WTC11 (cell line): ENCODE measurements at regions of chr19 and their contacts with region 1.

Region 1: GRCh38 chr19:18951665-18952281 is 10.8 kb upstream of the HOMER3 start:
- DNase-seq: no peak
- ATAC-seq: no peak
- H3K4me3 Mint-ChIP-seq: no peak overlapping the region
- H3K27ac Mint-ChIP-seq: no peak overlapping the region
- H3K4me1 Mint-ChIP-seq: no peaks in the 10 kb centered on the region
- H3K27me3 Mint-ChIP-seq: peaks cover 4% of the 10 kb centered on the region
- CTCF ChIP-seq: no peak

Region 2: DNA sequence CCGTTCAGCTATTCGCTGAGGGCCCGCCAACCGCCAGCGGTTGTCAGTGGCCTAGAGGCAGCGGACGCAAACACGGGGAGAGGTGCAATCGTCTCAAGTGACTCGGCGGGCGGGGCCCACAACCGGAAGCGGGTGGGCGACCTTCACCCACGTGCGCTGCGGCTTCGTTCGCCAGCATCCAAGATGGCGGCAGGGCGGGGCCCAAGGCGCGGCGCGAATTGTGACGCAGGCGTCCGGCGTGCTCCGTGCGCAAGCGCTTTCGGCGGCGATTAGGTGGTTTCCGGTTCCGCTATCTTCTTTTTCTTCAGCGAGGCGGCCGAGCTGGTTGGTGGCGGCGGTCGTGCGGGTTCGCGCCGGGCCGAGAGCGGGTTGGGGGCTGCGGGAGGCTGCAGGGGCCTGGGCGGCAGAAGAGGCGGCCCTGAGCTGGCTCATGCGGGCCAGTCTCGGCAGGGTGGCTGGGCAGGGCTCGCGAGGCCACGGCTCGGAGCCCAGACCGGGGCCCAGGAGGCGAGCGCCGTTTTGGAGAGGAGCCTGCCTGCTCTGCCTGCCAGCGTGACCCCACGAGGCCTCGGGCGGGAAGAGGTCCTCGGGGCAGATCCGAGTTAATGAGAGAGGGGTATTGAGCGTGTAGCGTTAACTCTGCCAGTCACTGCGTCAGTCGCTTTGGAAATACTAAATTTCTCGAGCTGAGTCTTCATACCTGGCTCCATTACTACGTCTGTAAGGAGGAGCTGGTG is 380.0 kb before region 1 on chr19 and contains the start of gene UBA52:
- CTCF ChIA-PET with region 1: no interaction called
- POLR2A ChIA-PET with region 1: interaction called, 12 read pairs
- DNase-seq: peak; percentile 99
- ATAC-seq: peak; percentile 92
- H3K4me3 Mint-ChIP-seq: peak within 1 kb of the TSS; percentile 76
- H3K27ac Mint-ChIP-seq: peak within 1 kb of the TSS; percentile 98
- H3K4me1 Mint-ChIP-seq: peaks cover 16% of the 10 kb centered on the region
- H3K27me3 Mint-ChIP-seq: no peaks in the 10 kb centered on the region
- CTCF ChIP-seq: no peak
- total RNA-seq, gene UBA52: 1,300 to 1,361 TPM (median 1,328 TPM) in 3 replicates

Region 3: GRCh38 chr19:18961767-18962620 is 10.2 kb after region 1 on chr19:
- CTCF ChIA-PET with region 1: interaction called, 3 read pairs
- POLR2A ChIA-PET with region 1: interaction called, 11 read pairs
- DNase-seq: peak; percentile 97
- ATAC-seq: peak; percentile 99
- H3K4me3 Mint-ChIP-seq: peak overlapping the region; percentile 54
- H3K27ac Mint-ChIP-seq: peak overlapping the region; percentile 79
- H3K4me1 Mint-ChIP-seq: peaks cover 15% of the 10 kb centered on the region
- H3K27me3 Mint-ChIP-seq: peaks cover 28% of the 10 kb centered on the region
- CTCF ChIP-seq: no peak

Region 4: DNA sequence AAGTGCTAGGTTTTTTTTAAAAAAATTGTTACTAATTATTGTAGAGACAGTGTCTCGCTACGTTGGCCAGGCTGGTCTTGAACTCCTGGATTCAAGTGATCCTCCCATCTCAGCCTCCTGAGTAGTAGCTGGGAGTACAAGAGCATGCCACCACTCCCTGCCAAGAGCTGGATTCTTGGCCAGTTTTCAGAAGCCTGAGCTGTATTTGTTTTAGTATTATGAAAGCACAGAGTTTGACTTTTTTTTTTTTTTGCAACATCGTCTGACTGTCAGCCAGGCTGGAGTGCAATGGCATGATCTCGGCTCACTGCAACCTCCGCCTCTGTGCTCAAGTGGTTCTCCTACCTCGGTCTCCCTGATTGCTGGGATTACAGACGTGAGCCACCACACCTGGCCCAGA is 88.6 kb after region 1 on chr19:
- CTCF ChIA-PET with region 1: no interaction called
- POLR2A ChIA-PET with region 1: no interaction called
- DNase-seq: no peak
- ATAC-seq: no peak
- H3K4me3 Mint-ChIP-seq: no peak overlapping the region
- H3K27ac Mint-ChIP-seq: no peak overlapping the region
- H3K4me1 Mint-ChIP-seq: no peaks in the 10 kb centered on the region
- H3K27me3 Mint-ChIP-seq: no peaks in the 10 kb centered on the region
- CTCF ChIP-seq: no peak